Activated CD8-positive, alpha-beta T cell treated with anti-CD3 and anti-CD28 coated beads for 36 hours (primary cell): ENCODE measurements at regions of chr17 and their contacts with region 1.

Region 1: DNA sequence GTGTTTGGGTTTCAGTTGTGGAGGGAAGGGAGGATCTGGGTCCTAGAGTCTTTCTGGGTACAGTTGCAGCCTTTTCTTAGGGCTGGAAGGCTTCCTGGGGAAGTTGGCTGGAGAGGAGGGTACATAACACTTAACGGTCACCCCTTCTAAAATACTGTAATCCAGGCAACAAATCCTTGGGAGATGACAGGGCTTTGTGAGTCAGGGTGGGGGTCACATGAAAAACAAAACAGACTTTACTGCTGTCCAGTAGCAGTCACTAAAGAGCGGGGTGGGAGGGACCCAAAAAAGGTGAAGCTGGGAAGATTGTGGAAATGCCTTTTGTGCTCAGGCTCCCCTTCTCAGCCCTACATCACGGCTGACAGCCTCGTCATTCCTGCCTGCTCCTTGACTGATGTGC is 6.3 kb downstream of the SAP30BP start:
- DNase-seq: no peak
- ATAC-seq: no peak
- H3K4me3 Mint-ChIP-seq: no peak overlapping the region
- H3K27ac Mint-ChIP-seq: no peak overlapping the region
- H3K4me1 Mint-ChIP-seq: peaks cover 31% of the 10 kb centered on the region
- H3K27me3 Mint-ChIP-seq: no peaks in the 10 kb centered on the region
- CTCF ChIP-seq: no peak

Region 2: GRCh38 chr17:75645889-75646637 is 27.4 kb before region 1 on chr17:
- CTCF ChIA-PET with region 1: interaction called, 12 read pairs
- POLR2A ChIA-PET with region 1: interaction called, 3 read pairs
- intact Hi-C with region 1: no loop called
- DNase-seq: peak; percentile 36
- ATAC-seq: peak; percentile 88
- H3K4me3 Mint-ChIP-seq: no peak overlapping the region
- H3K27ac Mint-ChIP-seq: peak overlapping the region; percentile 60
- H3K4me1 Mint-ChIP-seq: peaks cover 4% of the 10 kb centered on the region
- H3K27me3 Mint-ChIP-seq: no peaks in the 10 kb centered on the region
- CTCF ChIP-seq: no peak

Region 3: GRCh38 chr17:75693500-75694481 is 20.3 kb after region 1 on chr17:
- CTCF ChIA-PET with region 1: interaction called, 26 read pairs
- POLR2A ChIA-PET with region 1: interaction called, 4 read pairs
- intact Hi-C with region 1: no loop called
- DNase-seq: no peak
- ATAC-seq: no peak
- H3K4me3 Mint-ChIP-seq: no peak overlapping the region
- H3K27ac Mint-ChIP-seq: no peak overlapping the region
- H3K4me1 Mint-ChIP-seq: peaks cover 34% of the 10 kb centered on the region
- H3K27me3 Mint-ChIP-seq: no peaks in the 10 kb centered on the region
- CTCF ChIP-seq: no peak